ENCODE measurements at regions of chr20 and their contacts with region 1.

Region 1: DNA sequence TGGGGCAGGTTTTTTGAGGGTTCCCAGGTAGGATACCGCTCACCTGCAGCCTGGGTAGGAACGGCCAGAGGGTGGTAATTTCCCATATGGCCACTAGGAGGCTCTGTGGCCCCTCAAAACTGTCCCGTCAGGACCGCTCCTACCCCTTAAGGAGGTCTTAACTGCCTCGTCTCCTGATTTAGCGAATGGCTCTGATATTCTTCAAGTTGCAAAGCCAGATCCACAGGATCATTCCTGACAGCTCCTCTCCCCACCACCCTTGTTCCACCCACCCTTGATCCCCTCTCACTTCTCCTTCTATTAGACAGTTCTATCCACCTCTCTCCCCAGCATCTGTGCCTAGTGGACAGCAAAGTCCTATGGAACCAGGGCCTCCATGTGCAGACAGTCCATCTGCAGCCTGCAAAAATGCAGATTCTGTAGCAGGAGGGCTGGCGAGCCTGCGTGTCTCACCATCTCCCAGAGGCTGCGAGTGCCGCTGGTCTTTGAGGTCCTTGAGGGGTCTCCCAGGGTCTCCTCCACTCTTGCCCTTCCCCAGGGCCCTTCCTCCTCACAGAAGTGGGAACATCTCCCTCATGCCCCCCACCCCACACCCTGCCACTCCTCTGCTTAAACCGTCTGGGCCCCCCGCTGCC is 34.3 kb upstream of the ZBP1 start:
- DNase-seq: peak in 1 of 2 donors; percentile 50
- ATAC-seq: peak; percentile 54 to 82 (median 75)
- H3K4me3 ChIP-seq: no peak overlapping the region
- H3K27ac ChIP-seq: no peak overlapping the region
- H3K4me1 ChIP-seq: peaks cover 0 to 22% (median 9%) of the 10 kb centered on the region in 9 donors
- H3K27me3 ChIP-seq: no peaks in the 10 kb centered on the region
- CTCF ChIP-seq: peak; percentile 76 to 96 (median 91)

Region 2: DNA sequence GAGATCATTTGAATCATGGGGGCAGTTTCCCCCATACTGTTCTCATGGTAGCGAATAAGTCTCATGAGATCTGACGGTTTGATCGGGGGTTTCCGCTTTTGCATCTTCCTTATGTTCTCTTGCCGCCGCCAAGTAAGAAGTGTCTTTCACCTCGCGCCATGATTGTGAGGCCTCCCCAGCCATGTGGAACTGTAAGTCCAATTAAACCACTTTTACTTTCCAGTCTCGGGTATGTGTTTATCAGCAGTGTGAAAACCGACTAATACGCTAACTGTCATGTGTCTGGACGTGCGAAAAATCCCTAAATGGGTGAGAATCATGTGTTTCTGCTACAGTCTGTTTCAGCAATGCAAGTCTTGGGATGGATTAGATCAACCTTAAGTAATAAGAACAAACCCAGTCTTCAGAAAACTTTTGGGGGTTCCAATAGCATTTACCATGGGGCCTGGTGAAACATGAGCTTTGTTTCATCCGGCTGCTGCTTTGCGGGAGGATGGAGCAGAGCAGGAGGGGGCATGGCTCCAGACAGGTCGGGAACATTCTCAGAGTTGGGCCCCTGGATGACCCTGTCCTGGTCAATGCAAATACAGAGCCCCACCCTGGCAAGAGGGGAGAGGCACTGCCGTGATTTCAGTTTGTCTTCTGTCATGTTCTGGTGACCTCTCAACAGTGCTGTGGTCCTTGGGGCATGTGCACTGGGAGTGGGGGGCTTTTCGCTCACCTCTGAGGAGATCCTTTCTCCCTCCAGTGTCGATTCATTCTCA is 171.0 kb before region 1 on chr20:
- intact Hi-C with region 1: no loop called
- DNase-seq: no peak
- ATAC-seq: no peak
- H3K4me3 ChIP-seq: no peak overlapping the region
- H3K27ac ChIP-seq: no peak overlapping the region
- H3K4me1 ChIP-seq: peaks cover 0 to 16% (median 10%) of the 10 kb centered on the region in 9 donors
- H3K27me3 ChIP-seq: peaks cover 0 to 10% (median 0%) of the 10 kb centered on the region in 7 donors
- CTCF ChIP-seq: no peak

Region 3: DNA sequence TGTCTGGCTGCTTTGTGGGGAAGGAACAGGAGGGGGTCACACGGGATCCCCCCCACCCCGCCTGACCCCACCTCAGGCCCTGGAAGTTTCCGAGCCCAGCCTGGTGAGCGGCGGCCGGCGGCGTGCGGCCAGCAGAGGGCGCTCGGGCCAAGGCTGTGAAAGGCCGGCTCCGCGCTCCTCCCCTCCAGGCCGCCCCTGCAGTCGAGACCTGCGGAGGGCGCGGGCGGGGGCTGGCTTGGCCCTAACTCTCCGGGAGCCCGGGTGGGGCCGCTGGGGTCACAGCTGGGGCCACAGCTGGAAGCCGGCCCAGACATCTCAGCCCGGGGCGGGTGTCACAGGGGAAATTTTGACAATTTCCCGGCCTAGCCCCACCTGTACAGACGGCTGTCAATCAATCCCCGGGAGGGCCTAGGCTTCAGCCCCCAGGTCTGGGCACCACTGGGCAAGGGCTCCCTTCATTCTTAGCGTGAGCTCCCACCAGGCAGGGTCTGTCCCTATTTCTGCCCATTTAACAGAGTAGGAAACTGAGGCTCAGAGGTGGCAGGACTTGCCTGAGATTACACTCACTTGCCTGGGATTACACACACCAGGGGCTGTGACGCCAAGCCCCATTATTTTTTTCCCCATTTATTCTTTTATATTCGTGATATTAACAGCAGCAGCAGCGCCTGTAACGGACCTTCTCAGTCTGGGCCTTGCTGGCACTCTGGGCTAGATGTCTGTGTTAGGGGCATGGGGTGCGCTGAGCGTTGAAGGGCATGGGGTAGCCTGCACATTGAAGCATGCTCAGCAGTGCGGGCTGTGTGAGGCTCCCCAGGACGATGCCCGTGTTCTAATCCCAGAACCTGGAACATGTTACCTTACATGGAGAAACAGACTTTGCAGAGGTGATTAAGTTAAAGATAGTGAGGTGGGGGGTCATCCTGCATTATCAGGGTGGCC is 57.2 kb before region 1 on chr20:
- intact Hi-C with region 1: loop called in 2 of 10 experiments (anchors 5 kb)
- DNase-seq: peak; percentile 60 to 76
- ATAC-seq: peak; percentile 81 to 92 (median 84)
- H3K4me3 ChIP-seq: peak overlapping the region in 4 of 10 donors; percentile 8 to 34 (median 26)
- H3K27ac ChIP-seq: no peak overlapping the region
- H3K4me1 ChIP-seq: peaks cover 0 to 14% (median 7%) of the 10 kb centered on the region in 9 donors
- H3K27me3 ChIP-seq: peaks cover 0 to 28% (median 4%) of the 10 kb centered on the region in 7 donors
- CTCF ChIP-seq: peak; percentile 91 to 98 (median 96)

Region 4: GRCh38 chr20:57672159-57672558 is 17.7 kb after region 1 on chr20:
- intact Hi-C with region 1: no loop called
- DNase-seq: peak; percentile 51 to 70
- ATAC-seq: peak in 7 of 8 donors; percentile 66 to 84 (median 77)
- H3K4me3 ChIP-seq: peak overlapping the region in 2 of 10 donors; percentile 19 to 22
- H3K27ac ChIP-seq: peak overlapping the region in 1 of 10 donors; percentile 2
- H3K4me1 ChIP-seq: peaks cover 12 to 69% (median 28%) of the 10 kb centered on the region in 9 donors
- H3K27me3 ChIP-seq: no peaks in the 10 kb centered on the region
- CTCF ChIP-seq: no peak

Region 5: DNA sequence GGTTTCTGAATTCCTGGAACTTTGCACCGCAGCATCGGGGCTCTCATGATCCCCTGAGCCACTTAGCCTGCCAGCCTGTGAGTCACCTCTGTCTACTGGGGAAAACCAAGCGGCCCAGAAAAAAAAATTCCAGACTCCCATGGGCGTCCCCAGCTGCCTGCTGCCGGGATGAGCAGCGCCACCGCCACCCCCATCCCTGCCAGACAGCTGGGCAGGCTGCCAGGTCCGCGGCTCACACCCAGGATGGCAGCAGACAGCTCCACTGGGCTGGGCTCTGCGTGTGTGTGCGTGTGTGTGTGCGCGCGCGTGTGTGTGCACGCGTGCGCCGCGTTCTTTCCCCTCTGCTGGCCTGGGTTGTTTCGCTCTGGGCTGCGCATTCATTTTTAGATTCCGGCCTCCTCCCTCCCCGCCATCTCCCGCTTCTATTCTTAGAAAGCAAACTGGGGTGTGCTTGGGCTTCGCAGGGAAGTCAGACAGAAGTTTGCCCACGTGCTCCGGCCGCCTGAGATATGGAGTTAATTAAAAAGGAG is 94.2 kb after region 1 on chr20:
- intact Hi-C with region 1: loop called in 1 of 10 experiments (anchors 5 kb)
- DNase-seq: peak; percentile 82 to 85
- ATAC-seq: peak; percentile 83 to 95 (median 92)
- H3K4me3 ChIP-seq: peak overlapping the region in 9 of 10 donors; percentile 18 to 44 (median 39)
- H3K27ac ChIP-seq: peak overlapping the region; percentile 26 to 93 (median 82)
- H3K4me1 ChIP-seq: peaks cover 13 to 41% (median 28%) of the 10 kb centered on the region in 9 donors
- H3K27me3 ChIP-seq: no peaks in the 10 kb centered on the region
- CTCF ChIP-seq: no peak

Region 6: GRCh38 chr20:57838670-57839151 is 184.2 kb after region 1 on chr20:
- intact Hi-C with region 1: loop called in 1 of 10 experiments (anchors 10 kb)
- DNase-seq: no peak
- ATAC-seq: peak in 2 of 8 donors; percentile 23 to 45
- H3K4me3 ChIP-seq: no peak overlapping the region
- H3K27ac ChIP-seq: peak overlapping the region in 2 of 10 donors; percentile 14 to 65
- H3K4me1 ChIP-seq: peaks cover 0 to 21% (median 0%) of the 10 kb centered on the region in 9 donors
- H3K27me3 ChIP-seq: peaks cover 0 to 6% (median 0%) of the 10 kb centered on the region in 7 donors
- CTCF ChIP-seq: no peak

Region 7: DNA sequence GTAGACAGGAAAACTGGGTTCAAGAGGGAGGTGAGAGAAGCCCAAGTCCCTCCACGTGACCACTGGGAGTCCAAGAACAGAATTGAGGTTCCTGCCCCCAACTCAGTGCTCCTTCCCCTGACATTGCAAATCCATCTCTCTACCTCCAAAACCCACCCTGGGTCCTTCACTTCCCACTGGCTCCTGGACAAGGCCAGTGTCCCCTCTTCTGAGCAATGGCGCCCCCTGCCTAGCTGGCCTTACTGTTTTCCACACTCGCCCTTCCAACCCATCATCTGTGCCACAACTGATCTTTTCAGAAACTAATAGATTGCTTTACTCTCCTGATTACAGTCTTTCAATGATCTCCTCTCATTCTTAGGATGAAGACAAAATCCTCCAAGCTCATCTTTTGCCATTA is 373.6 kb after region 1 on chr20:
- intact Hi-C with region 1: loop called in 1 of 10 experiments (anchors 5 kb)
- DNase-seq: no peak
- ATAC-seq: no peak
- H3K4me3 ChIP-seq: no peak overlapping the region
- H3K27ac ChIP-seq: no peak overlapping the region
- H3K4me1 ChIP-seq: peaks cover 0 to 16% (median 0%) of the 10 kb centered on the region in 9 donors
- H3K27me3 ChIP-seq: peaks cover 0 to 26% (median 8%) of the 10 kb centered on the region in 7 donors
- CTCF ChIP-seq: peak in 7 of 9 donors; percentile 7 to 48 (median 28)

Region 8: GRCh38 chr20:58087193-58087858 is 432.8 kb after region 1 on chr20:
- intact Hi-C with region 1: loop called (anchors 2 to 10 kb)
- DNase-seq: peak in 1 of 2 donors; percentile 46
- ATAC-seq: peak in 3 of 8 donors; percentile 55 to 56 (median 55)
- H3K4me3 ChIP-seq: no peak overlapping the region
- H3K27ac ChIP-seq: no peak overlapping the region
- H3K4me1 ChIP-seq: peaks cover 0 to 5% (median 0%) of the 10 kb centered on the region in 9 donors
- H3K27me3 ChIP-seq: no peaks in the 10 kb centered on the region
- CTCF ChIP-seq: peak; percentile 76 to 96 (median 88)

Region 9: DNA sequence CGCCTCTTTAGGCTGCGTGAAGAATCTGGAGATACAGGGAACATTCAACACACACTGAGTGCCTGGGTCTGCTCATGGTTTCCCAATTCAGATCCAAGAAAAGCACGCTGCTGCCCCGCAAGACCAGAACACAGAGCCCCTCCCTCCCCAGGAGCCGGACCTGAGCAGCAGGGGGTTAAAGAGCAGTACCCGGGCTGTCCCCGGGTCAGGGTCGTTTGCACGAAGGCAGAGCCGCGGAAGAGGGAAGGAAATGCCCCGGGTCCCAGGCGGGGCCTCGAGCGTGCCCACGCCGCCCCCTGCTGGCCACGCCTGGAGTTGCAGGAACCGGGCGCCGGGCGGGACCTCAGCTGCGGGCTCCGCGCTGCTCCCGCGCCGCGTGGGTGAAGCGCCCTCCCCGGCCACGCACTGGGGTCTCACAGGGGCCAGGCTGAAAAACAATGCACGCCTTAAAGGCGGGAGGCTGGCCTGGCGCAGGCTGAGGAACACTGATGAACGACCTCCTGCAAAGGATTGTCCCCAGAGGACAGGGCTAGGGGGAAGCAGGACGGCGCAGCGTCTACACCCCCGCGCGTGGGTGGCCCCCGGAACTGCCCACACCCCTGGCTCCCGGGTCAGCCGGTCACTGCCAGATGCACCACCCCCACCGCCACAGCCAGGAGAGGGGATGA is 525.1 kb after region 1 on chr20:
- intact Hi-C with region 1: loop called (anchors 1 to 10 kb)
- DNase-seq: peak; percentile 16 to 72
- ATAC-seq: peak; percentile 65 to 83 (median 78)
- H3K4me3 ChIP-seq: peak overlapping the region in 8 of 10 donors; percentile 21 to 48 (median 32)
- H3K27ac ChIP-seq: no peak overlapping the region
- H3K4me1 ChIP-seq: peaks cover 0 to 26% (median 12%) of the 10 kb centered on the region in 9 donors
- H3K27me3 ChIP-seq: peaks cover 0 to 36% (median 16%) of the 10 kb centered on the region in 7 donors
- CTCF ChIP-seq: peak; percentile 94 to 100 (median 99)